A549 (cell line): ENCODE measurements at regions of chr16 and their contacts with region 1.

Region 1: GRCh38 chr16:2155091-2156021 is at the start of gene TRAF7:
- DNase-seq: peak; percentile 99 to 100
- ATAC-seq: peak; percentile 70 to 84
- H3K4me3 ChIP-seq: peak within 1 kb of the TSS; percentile 88
- H3K27ac ChIP-seq: peak within 1 kb of the TSS; percentile 94
- H3K4me1 ChIP-seq: peaks cover 62% of the 10 kb centered on the region
- CTCF ChIP-seq: no peak
- EP300 ChIP-seq: no peak
- POLR2A ChIP-seq: peak; percentile 99
- RAD21 ChIP-seq: no peak
- polyA plus RNA-seq, gene TRAF7: 31.9 and 32.0 TPM in 2 replicates

Region 2: DNA sequence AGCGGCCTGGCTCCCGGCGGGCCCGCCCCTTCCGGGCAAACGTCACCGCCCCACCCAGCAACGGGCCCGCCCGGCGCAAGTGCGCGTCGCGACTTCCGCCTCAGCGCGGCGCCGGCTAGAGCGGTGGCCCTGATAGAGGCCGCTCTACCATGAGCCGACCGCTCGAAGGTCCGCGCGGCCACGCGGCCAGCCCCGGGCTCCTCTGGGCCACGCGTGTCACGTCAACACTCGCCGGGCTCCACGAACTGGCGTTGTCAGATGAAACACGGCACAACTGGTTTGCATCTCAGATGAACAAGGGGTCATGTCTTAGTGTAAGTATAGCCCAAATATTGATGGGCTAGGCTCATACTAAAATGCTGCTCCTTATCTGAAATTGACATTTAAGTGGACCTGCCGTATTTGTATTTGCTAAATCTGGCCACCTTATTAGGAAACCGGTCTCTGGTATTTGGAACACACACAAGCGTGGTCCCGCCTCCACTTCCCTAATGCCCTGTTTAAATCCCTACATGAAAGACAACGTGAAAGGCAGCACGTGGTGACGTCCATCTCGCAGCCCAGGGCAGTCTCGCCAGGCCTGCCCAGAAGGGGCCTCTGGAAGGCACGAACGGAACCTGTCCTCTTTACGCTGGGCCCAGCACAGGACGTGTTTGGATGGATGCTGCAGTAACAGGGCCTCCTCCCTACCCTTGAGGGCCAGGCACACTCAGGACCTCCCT is 145.4 kb before region 1 on chr16 and contains the start of gene ZNF598:
- CTCF ChIA-PET with region 1: interaction called, 21 read pairs
- POLR2A ChIA-PET with region 1: interaction called, 11 read pairs
- DNase-seq: peak; percentile 84 to 93
- ATAC-seq: peak; percentile 89 to 90
- H3K4me3 ChIP-seq: peak within 1 kb of the TSS; percentile 94
- H3K27ac ChIP-seq: peak within 1 kb of the TSS; percentile 95 to 98
- H3K4me1 ChIP-seq: peaks cover 53% of the 10 kb centered on the region
- CTCF ChIP-seq: no peak; the same call in 2 of the 3 replicates
- EP300 ChIP-seq: no peak
- POLR2A ChIP-seq: peak; percentile 81
- RAD21 ChIP-seq: no peak
- polyA plus RNA-seq, gene ZNF598: 15.3 and 17.7 TPM in 2 replicates

Region 3: GRCh38 chr16:2047330-2048115 is 107.8 kb before region 1 on chr16 and contains the starts of genes NTHL1 and TSC2:
- CTCF ChIA-PET with region 1: no interaction called
- POLR2A ChIA-PET with region 1: interaction called, 15 read pairs
- DNase-seq: peak; percentile 86 to 98
- ATAC-seq: peak; percentile 92 to 94
- H3K4me3 ChIP-seq: peak within 1 kb of the TSS; percentile 68
- H3K27ac ChIP-seq: peak within 1 kb of the TSS; percentile 79 to 91
- H3K4me1 ChIP-seq: peaks cover 35% of the 10 kb centered on the region
- CTCF ChIP-seq: peak; percentile 29; the same call in 1 of the 3 replicates
- EP300 ChIP-seq: no peak
- POLR2A ChIP-seq: peak; percentile 72
- RAD21 ChIP-seq: peak; percentile 10 to 15; a peak in 1 of 5 replicates
- polyA plus RNA-seq, gene NTHL1: 28.8 and 34.8 TPM in 2 replicates
- polyA plus RNA-seq, gene TSC2: 32.6 and 41.7 TPM in 2 replicates

Region 4: GRCh38 chr16:2194852-2195321 is 39.5 kb after region 1 on chr16:
- CTCF ChIA-PET with region 1: interaction called, 3 read pairs
- POLR2A ChIA-PET with region 1: interaction called, 17 read pairs
- DNase-seq: peak; percentile 69 to 82
- ATAC-seq: peak; percentile 64 to 88
- H3K4me3 ChIP-seq: no peak overlapping the region
- H3K27ac ChIP-seq: no peak overlapping the region
- H3K4me1 ChIP-seq: peaks cover 18% of the 10 kb centered on the region
- CTCF ChIP-seq: peak; percentile 74
- EP300 ChIP-seq: no peak
- POLR2A ChIP-seq: no peak
- RAD21 ChIP-seq: peak; percentile 77 to 87

Region 5: DNA sequence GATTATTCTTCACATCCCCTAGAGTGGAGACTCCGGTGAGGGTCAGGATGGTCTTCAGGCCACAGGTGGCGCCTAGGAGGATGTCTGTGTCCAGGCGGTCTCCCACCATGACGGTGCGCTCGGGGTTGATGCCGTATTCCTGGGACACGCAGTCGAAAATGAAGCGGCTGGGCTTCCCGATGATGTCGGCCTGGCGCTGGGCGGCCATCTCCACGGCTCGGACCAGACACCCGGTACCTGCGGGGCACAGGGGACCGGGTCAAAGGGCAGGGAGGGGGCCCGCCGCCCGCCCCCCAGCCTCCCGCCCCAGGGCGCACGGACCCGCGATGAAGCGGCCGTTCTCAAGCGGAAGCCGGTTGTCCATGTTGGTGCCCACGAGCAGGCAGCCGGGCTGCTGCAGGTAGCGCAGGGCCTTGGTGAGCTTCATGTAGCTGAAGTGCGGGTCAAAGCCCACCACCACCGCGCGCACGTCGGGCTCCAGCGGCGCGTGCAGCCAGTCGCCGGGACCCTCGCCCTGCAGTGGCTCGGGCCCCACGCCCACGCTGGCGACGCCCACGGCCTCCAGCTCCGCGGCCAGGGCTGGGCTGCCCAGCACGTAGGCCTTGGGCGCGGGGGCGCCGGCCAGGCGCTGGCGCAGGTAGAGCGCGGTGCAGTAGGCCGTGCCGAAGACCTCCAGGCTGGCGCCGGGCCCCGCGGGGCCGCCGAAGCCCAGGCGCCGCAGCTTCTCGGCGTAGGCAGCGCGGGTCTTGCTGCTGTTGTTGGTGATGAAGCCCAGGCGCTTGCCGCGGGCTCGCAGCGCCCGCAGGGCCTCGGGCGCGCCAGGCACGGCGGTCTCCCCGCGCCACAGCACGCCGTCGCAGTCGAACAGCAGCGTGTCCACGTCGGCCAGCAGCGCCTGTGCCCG is 58.7 kb after region 1 on chr16:
- CTCF ChIA-PET with region 1: interaction called, 4 read pairs
- POLR2A ChIA-PET with region 1: interaction called, 21 read pairs
- DNase-seq: no peak
- ATAC-seq: peak in 1 of 2 experiments; percentile 28; a peak in 3 of 6 replicates
- H3K4me3 ChIP-seq: peak overlapping the region; percentile 98
- H3K27ac ChIP-seq: peak overlapping the region; percentile 89 to 95
- H3K4me1 ChIP-seq: peaks cover 30% of the 10 kb centered on the region
- CTCF ChIP-seq: no peak
- EP300 ChIP-seq: no peak
- POLR2A ChIP-seq: peak; percentile 86
- RAD21 ChIP-seq: no peak

Region 6: GRCh38 chr16:2388875-2389433 is 233.6 kb after region 1 on chr16:
- CTCF ChIA-PET with region 1: no interaction called
- POLR2A ChIA-PET with region 1: no interaction called
- DNase-seq: peak in 1 of 2 experiments; percentile 30
- ATAC-seq: peak; percentile 50; a peak in 4 of 6 replicates
- H3K4me3 ChIP-seq: no peak overlapping the region
- H3K27ac ChIP-seq: no peak overlapping the region
- H3K4me1 ChIP-seq: no peaks in the 10 kb centered on the region
- CTCF ChIP-seq: no peak
- EP300 ChIP-seq: no peak
- POLR2A ChIP-seq: no peak
- RAD21 ChIP-seq: no peak

Region 7: GRCh38 chr16:2487903-2488531 is 332.7 kb after region 1 on chr16:
- CTCF ChIA-PET with region 1: no interaction called
- POLR2A ChIA-PET with region 1: no interaction called
- DNase-seq: no peak
- ATAC-seq: no peak
- H3K4me3 ChIP-seq: no peak overlapping the region
- H3K27ac ChIP-seq: no peak overlapping the region
- H3K4me1 ChIP-seq: no peaks in the 10 kb centered on the region
- CTCF ChIP-seq: no peak
- EP300 ChIP-seq: no peak
- POLR2A ChIP-seq: no peak
- RAD21 ChIP-seq: no peak